ENCODE measurements at regions of chr2 and their contacts with region 1.

Region 1: DNA sequence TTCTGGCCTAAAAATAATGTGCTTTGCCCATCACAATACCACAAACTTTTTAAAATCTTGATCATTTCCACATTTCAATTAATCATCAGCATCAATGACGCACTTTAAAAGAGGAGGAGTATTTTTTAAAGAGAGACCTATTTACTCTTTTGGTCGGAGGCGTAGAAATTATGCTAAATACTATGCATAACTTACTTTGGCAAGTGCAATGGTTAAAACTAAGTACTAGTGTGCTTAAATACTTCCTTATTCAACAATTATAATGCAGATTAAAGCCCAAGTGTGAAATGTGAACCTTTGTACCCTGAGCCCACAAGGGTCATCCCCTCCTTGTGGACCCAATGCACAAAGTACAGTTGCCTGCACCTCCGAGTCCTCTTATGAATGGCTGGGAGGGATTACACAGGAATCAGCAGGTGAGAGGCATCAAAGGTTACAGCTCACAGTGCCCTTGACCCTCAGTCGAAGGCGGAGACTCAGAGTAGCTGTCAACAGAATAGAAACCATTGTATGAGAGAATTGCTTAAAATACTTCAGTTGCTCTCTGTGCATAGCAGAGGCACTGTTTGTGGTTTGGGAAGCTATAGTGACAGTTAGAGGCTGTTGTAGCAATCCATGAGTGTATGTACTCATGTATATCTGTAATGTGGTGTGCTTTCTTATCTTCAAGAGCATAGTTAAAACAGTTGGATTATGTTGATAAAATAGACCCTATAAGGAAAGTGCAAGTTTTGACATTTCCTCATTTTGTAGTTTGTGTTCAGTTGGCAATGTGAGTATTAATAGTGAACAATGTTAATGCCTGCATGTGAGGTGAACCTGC is 151.7 kb upstream of the ITGA4 start:
- DNase-seq: peak; percentile 91
- H3K4me3 Mint-ChIP-seq: peak overlapping the region; percentile 66
- H3K27ac Mint-ChIP-seq: peak overlapping the region; percentile 89
- H3K4me1 Mint-ChIP-seq: peaks cover 65% of the 10 kb centered on the region
- H3K27me3 Mint-ChIP-seq: no peaks in the 10 kb centered on the region

Region 2: DNA sequence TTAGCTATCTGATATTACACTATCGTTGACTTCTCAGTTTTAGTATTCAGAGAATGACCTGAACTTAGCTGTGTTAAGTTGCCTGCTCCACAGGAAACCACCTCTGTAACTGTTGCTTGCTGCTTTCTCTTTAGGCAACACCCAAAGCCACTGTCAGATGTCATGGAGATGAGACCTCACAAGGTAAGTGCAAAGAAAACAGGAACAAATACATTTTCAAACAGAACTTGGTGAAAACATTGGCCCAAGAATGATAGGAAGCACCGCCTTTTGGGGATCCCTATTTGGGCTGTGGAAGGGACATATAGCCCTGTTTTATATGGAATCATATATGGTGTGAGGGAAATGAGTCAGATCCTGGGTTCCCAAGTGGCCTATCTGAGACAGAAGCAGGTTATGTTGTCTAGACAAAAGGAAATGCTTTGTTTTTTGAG is 181.7 kb before region 1 on chr2:
- intact Hi-C with region 1: loop called (anchors 1 kb)
- DNase-seq: peak; percentile 93
- H3K4me3 Mint-ChIP-seq: peak overlapping the region; percentile 70
- H3K27ac Mint-ChIP-seq: peak overlapping the region; percentile 90
- H3K4me1 Mint-ChIP-seq: peaks cover 55% of the 10 kb centered on the region
- H3K27me3 Mint-ChIP-seq: no peaks in the 10 kb centered on the region

Region 3: DNA sequence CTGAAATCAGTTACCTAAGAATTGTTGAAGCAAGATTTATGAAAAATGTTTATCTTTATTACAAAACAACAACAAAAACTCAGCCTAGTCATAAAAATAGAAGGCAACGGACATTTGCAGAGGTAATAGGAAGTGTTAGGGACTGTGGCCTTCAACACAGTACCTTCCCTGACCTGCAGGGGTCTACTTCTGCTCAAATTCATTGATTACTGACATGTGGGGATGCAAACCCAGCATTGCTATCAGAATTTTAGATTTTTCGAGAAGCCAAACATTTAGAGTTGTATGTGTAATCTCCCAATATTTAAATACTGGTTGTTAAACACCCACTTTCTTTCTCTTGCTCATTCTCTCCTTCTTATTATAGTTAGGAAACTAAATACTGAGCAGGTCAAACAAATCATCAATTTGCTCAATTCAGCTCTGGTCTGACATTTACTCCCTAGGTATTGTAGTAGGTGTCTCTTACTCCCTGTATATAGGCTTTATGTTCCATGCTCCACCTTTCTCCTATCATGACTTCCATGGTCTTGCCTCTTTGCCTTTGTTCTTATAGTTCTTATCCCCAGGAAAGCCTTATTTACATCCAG is 126.6 kb before region 1 on chr2:
- intact Hi-C with region 1: loop called (anchors 2 kb)
- DNase-seq: peak; percentile 75
- H3K4me3 Mint-ChIP-seq: peak overlapping the region; percentile 30
- H3K27ac Mint-ChIP-seq: peak overlapping the region; percentile 86
- H3K4me1 Mint-ChIP-seq: peaks cover 40% of the 10 kb centered on the region
- H3K27me3 Mint-ChIP-seq: no peaks in the 10 kb centered on the region

Region 4: DNA sequence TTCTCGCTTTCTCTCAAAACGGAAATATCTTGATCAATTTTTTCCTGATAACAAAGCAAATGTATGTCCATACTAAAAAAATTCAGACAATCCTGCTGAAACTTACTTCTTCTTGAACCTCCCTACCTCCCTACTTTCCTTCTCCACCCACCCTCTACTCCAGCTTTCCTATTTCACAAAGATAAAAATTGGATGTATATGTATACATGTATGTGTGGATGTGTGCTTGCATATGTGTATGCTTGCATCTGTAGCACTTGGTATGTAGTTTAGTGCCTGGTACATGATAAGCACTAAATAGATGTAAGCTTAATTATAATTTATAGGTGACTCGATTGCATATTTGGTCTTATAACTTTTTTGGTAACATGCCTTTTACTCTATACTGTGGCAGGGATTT is 15.8 kb before region 1 on chr2:
- intact Hi-C with region 1: loop called (anchors 2 kb)
- DNase-seq: no peak
- H3K4me3 Mint-ChIP-seq: no peak overlapping the region
- H3K27ac Mint-ChIP-seq: no peak overlapping the region
- H3K4me1 Mint-ChIP-seq: peaks cover 8% of the 10 kb centered on the region
- H3K27me3 Mint-ChIP-seq: no peaks in the 10 kb centered on the region